ENCODE measurements at regions of chr11 and their contacts with region 1.

Region 1: GRCh38 chr11:120303004-120303637 is 22.0 kb upstream of the TLCD5 start:
- DNase-seq: peak; percentile 86
- H3K4me3 Mint-ChIP-seq: no peak overlapping the region
- H3K27ac Mint-ChIP-seq: peak overlapping the region; percentile 55
- H3K4me1 Mint-ChIP-seq: peaks cover 22% of the 10 kb centered on the region
- H3K27me3 Mint-ChIP-seq: peaks cover 5% of the 10 kb centered on the region
- CTCF ChIP-seq: peak; percentile 88

Region 2: DNA sequence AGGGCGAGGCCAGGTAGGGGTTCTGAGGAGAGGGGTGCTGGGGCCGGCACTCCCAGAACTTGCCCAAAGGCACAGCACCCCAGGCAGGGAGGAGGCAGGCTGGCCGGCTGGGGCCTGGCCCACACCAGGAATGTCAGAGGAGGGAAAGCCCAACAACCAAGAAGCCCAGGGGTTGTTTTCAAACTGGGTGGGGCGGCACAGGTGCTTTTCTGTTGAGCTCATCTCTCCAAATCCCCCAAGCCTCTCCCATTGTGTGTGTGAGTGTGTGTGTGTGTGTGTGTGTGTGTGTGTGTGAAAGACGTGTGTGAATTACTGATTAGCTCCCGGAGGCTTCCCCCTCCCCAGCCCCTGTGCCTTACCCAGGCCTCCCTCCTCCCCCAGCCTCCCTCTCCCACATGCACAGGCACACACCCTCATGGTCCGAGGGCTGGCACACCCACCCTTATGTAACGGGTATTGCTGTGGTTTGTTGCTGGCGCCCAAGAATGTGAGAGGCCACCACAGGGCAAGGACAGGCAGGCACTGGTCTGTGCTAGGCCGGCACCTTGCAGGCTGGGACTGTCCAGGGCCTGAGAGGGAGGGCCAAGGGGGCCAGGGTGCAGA is 181.1 kb before region 1 on chr11:
- CTCF ChIA-PET with region 1: interaction called, 4 read pairs
- POLR2A ChIA-PET with region 1: no interaction called
- intact Hi-C with region 1: loop called (anchors 5 kb)
- DNase-seq: peak; percentile 60
- H3K4me3 Mint-ChIP-seq: peak overlapping the region; percentile 65
- H3K27ac Mint-ChIP-seq: peak overlapping the region; percentile 91
- H3K4me1 Mint-ChIP-seq: peaks cover 50% of the 10 kb centered on the region
- H3K27me3 Mint-ChIP-seq: no peaks in the 10 kb centered on the region
- CTCF ChIP-seq: no peak

Region 3: DNA sequence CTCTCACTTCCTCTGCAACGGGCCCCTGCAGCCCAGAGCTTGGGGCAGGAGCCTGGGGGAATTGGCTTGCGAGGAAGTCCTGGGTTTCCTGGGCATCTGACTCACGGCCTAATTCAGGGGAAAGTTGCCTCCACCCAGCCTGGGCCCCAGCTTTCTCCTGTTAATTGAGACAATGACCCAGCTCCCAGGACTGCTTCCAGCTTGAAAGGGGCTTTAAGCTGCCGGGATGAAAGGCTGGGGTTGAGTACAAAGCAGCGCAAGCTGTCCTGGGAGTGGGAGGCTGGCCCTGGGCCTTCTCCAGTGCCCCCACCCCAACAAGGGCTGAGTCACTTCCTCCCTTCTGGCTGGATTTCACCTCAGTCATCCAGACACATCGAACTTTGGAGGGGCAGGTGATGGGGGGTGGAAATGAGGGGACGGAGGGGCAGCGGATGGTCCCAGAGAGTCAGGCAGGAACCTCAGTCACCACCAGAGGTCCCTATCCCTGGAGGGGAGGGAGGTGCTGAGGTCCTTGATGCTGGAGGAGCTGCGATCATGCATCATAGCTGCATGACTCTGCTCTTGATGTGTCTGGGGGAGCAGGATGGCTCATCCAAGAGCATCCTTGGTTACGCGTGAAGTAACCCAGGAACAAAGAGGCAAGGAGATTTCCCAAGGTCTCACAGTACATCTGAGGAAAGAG is 122.4 kb before region 1 on chr11:
- CTCF ChIA-PET with region 1: interaction called, 52 read pairs
- POLR2A ChIA-PET with region 1: interaction called, 3 read pairs
- intact Hi-C with region 1: no loop called
- DNase-seq: no peak
- H3K4me3 Mint-ChIP-seq: no peak overlapping the region
- H3K27ac Mint-ChIP-seq: no peak overlapping the region
- H3K4me1 Mint-ChIP-seq: peaks cover 6% of the 10 kb centered on the region
- H3K27me3 Mint-ChIP-seq: peaks cover 16% of the 10 kb centered on the region
- CTCF ChIP-seq: no peak

Region 4: GRCh38 chr11:120235024-120235861 is 67.9 kb before region 1 on chr11:
- CTCF ChIA-PET with region 1: interaction called, 526 read pairs
- POLR2A ChIA-PET with region 1: interaction called, 13 read pairs
- intact Hi-C with region 1: loop called (anchors 1 kb)
- DNase-seq: peak; percentile 75
- H3K4me3 Mint-ChIP-seq: no peak overlapping the region
- H3K27ac Mint-ChIP-seq: no peak overlapping the region
- H3K4me1 Mint-ChIP-seq: no peaks in the 10 kb centered on the region
- H3K27me3 Mint-ChIP-seq: peaks cover 28% of the 10 kb centered on the region
- CTCF ChIP-seq: peak; percentile 89

Region 5: DNA sequence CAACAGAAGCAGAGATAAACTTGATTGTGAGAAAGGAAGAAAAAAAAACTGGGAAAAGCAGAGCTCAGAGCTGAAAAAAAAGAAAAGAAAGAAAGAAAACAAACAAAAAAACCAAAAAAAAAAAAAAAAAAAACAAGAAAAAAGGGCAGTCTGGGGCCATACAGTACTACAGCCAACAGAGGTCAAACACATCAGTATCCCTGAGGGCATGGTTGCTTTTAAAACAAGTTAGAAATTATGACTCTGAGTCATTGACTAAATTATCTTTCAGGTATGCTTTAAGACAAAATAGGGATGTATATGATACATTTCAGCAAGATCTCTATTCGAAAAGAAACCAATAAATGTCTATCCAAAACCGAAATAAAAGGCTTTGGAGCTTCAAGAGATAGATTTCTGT is 15.1 kb before region 1 on chr11:
- CTCF ChIA-PET with region 1: interaction called, 18 read pairs
- POLR2A ChIA-PET with region 1: no interaction called
- intact Hi-C with region 1: no loop called
- DNase-seq: no peak
- H3K4me3 Mint-ChIP-seq: no peak overlapping the region
- H3K27ac Mint-ChIP-seq: no peak overlapping the region
- H3K4me1 Mint-ChIP-seq: no peaks in the 10 kb centered on the region
- H3K27me3 Mint-ChIP-seq: peaks cover 9% of the 10 kb centered on the region
- CTCF ChIP-seq: no peak

Measured in MCF 10A (cell line).